Activated T-helper 1 cell treated with anti-CD3 and anti-CD28 coated beads, Interleukin-12 subunit alpha, Interleukin-12 subunit beta, Interleukin-2, Interleukin-4 antibody, amounts not matched to agents 30 ng/mL and 10 ng/mL and 1 ng/mL, durations not matched to agents 14 hours and 24 hours and 36 hours (primary cell): ENCODE measurements at regions of chr5 and their contacts with region 1.

Region 1: DNA sequence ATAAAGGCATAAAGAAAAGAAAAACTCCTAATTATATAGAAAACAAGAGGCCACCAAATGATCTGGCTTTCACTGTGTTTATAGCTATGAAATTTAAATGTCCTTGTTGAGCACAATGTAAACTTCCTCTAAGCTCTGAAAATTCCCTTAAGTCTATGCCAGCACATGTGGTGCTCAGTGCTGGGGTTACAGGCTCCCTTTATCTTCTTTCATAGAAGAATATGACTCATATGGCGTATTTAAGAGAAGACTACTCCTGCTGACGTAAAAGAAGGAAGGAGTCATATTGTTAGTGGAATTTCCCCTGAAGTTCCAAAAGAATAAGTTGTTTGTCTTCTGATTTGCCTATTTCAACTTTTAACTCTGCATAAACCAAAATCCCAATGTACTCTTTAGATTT is 30.4 kb downstream of the RNF145 start:
- DNase-seq: no peak
- H3K4me3 Mint-ChIP-seq: peak overlapping the region; percentile 66
- H3K27ac Mint-ChIP-seq: peak overlapping the region; percentile 91
- H3K4me1 Mint-ChIP-seq: peaks cover 93% of the 10 kb centered on the region
- H3K27me3 Mint-ChIP-seq: no peaks in the 10 kb centered on the region

Region 2: DNA sequence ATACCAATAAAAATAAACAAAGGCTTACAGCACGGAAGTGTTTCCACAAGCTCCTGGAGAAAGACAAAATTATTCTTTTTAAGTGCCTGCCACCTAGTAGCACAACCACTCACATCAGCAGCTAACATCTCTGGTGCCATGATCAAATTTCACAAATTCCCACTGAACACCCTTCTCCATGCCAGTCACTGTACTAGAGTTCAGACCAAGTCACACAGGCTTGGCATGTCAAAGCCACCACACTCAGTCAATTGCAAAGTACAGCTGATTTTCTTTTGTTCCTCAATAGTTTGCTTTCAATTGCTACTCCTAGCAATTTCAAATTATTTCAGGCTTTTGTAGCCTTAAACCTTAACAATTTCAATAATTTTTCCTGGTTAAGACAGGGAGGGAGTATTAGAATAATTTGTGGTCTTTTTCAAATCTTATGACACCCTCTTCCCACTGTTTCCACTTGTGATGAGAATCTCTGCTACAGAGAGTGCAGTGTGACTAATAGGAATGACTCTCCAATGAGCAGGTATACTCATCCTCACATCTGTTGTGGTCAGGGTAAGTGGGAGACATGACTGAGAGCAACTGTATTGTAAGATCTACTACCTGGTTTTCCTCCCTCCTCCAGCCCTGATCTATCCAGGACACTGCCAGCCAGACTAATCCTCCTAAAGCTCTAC is 15.8 kb before region 1 on chr5:
- intact Hi-C with region 1: loop called (anchors 1 kb)
- DNase-seq: no peak
- H3K4me3 Mint-ChIP-seq: peak overlapping the region; percentile 16
- H3K27ac Mint-ChIP-seq: peak overlapping the region; percentile 64
- H3K4me1 Mint-ChIP-seq: peaks cover 53% of the 10 kb centered on the region
- H3K27me3 Mint-ChIP-seq: no peaks in the 10 kb centered on the region

Region 3: DNA sequence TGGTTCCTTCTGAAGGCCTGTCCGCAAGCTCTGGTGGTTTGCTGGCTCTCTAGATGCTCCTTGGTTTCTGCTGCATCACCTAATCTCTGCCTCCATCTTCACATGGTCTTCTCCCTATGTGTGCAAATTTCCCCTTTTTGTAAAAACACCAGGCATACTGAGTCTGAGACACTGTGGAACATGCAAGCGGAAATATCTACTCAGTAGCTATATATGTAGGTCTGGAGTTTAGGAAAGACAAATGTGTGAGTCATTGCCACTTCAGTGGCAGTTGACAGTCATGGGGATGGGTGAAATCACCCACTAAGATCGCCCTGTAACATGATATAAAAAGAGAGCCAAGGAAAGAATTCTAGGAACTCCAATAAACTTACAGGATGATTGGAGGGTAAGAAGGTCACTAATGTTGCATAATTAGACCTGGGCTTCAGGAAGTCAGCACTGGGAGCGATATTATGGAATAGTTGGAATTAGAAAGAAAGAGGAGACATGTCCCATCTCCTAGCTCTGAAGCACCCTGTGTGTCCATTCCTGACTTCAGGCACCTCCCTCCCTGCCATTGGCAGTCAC is 61.4 kb after region 1 on chr5:
- intact Hi-C with region 1: loop called (anchors 1 kb)
- DNase-seq: no peak
- H3K4me3 Mint-ChIP-seq: peak overlapping the region; percentile 11
- H3K27ac Mint-ChIP-seq: peak overlapping the region; percentile 61
- H3K4me1 Mint-ChIP-seq: peaks cover 41% of the 10 kb centered on the region
- H3K27me3 Mint-ChIP-seq: peaks cover 5% of the 10 kb centered on the region

Region 4: GRCh38 chr5:159331093-159331973 is 152.4 kb after region 1 on chr5:
- intact Hi-C with region 1: loop called (anchors 5 kb)
- DNase-seq: peak; percentile 53
- H3K4me3 Mint-ChIP-seq: peak overlapping the region; percentile 72
- H3K27ac Mint-ChIP-seq: peak overlapping the region; percentile 58
- H3K4me1 Mint-ChIP-seq: peaks cover 56% of the 10 kb centered on the region
- H3K27me3 Mint-ChIP-seq: peaks cover 25% of the 10 kb centered on the region

Region 5: GRCh38 chr5:159773062-159773924 is 594.3 kb after region 1 on chr5:
- intact Hi-C with region 1: loop called (anchors 10 kb)
- DNase-seq: peak; percentile 79
- H3K4me3 Mint-ChIP-seq: peak overlapping the region; percentile 49
- H3K27ac Mint-ChIP-seq: peak overlapping the region; percentile 44
- H3K4me1 Mint-ChIP-seq: peaks cover 33% of the 10 kb centered on the region
- H3K27me3 Mint-ChIP-seq: peaks cover 29% of the 10 kb centered on the region